Astrocyte of the cerebellum (primary cell): ENCODE measurements at regions of chr11 and their contacts with region 1.

Region 1: DNA sequence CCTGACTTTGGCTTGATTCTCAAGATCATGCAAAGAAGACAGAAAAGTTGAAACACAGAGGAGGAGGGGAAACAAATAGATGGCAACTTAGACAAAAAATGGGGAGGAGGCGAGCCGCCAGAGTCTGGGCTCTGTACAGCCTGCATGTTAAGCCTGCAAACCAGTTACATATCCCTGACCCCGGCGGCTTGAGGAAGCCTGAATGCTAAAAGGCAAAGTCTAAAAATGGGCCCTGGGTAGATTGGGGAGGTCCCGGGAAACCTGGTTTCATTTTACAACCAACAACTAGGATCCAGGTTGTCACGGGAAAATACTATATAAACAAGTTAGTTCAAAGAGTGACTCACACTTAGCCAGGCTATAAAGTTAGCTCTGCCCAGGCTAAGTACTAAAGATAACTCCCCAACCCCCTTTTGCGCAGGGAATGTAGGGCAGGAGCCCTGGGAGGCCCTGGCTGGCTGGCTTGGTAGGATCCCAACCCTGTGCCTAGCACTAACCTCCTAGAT is 18.8 kb upstream of the ZBTB16 start:
- DNase-seq: peak; percentile 41
- H3K4me3 ChIP-seq: no peak overlapping the region
- CTCF ChIP-seq: no peak

Region 2: DNA sequence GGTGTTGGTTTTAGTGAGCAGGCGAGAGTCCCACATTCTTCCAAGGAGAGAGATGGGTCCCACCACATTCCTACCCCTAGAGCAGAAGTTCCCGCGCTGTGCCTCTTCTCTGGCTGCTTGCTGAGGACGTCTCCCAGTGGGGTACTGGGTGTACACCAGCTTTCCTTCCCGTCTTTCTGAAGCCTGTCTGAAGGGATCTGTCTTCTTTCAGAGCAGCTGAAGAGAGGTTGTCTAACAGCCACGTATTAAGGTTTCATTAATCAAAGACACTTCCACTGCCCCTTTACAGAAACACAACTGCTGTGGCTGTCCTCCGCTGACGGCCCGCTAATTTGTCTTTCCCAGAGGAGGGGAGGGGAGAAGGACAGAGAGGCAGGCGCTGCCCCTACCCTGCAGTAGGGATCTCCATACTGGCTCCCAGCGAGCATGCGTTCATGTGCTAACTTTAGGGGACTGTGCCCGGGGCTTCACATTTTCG is 74.7 kb after region 1 on chr11:
- in situ Hi-C with region 1: loop called (anchors 5 kb)
- DNase-seq: no peak
- H3K4me3 ChIP-seq: no peak overlapping the region
- CTCF ChIP-seq: no peak

Region 3: DNA sequence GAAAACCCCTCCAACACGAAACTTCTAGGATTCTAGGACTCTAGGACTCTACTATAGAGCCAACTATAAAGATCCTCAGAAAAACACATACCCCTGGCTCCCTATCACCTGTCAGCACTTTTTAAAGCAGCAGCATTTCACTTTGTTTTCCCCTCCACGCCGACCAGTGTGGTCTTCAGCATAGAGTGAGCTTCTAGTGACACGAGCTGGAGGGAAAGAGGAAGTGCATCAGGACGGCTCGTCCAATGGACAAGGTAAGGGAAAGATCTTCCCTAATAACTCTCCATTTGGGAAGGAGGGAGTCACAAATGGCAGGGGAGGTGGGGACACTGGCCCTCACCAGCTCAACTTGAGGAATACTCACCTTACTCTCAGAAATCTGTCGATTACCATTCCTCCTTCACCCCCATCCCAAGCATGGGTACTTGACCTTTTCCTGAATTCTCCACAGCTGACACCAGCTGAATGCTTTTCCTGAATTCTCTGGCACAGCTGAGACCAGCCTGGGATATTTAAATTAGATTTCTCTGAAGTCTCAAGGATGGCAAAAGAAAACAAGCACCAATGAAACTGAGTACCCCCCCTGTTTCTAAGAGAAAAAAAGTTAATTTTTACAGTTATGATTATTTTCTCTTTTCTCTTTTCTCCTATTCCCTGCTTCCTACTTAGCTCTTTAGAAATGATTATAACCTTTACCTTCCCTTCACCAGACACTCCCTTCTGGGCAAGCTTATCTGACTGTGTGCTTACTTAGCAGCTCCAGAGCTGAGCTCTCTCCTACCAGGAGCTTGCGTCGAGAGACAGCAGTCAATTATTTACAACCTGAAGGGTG is 222.1 kb after region 1 on chr11:
- in situ Hi-C with region 1: no loop called
- DNase-seq: peak; percentile 40
- H3K4me3 ChIP-seq: no peak overlapping the region
- CTCF ChIP-seq: peak; percentile 90